ENCODE measurements at regions of chr19 and their contacts with region 1.

Region 1: DNA sequence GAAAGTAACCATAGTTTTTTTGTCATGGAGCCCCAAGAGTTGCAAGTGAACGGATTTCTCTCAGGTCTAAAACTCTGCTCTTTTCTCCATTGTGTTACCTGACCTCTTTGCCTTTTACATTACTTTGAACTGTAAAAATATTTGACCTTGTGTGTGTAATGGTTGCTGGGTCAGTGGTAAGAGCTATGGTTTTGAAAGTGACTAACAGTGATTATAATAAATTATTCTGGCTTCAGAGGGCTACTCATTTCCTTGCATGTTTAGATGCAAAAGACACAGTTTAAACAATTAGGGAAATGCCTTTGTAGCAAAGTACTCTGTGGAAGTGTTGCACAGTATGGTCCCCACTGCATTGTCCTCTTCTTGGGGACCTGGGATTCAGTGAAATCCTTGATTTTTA is 29.3 kb upstream of the PSG8 start:
- DNase-seq: no peak
- H3K4me3 ChIP-seq: no peak overlapping the region
- H3K27me3 ChIP-seq: no peaks in the 10 kb centered on the region
- CTCF ChIP-seq: no peak

Region 2: GRCh38 chr19:42683917-42684513 is 110.8 kb before region 1 on chr19:
- CTCF ChIA-PET with region 1: interaction called, 11 read pairs
- POLR2A ChIA-PET with region 1: no interaction called
- DNase-seq: no peak
- H3K4me3 ChIP-seq: no peak overlapping the region
- H3K27me3 ChIP-seq: peaks cover 2% of the 10 kb centered on the region; the same call in 1 of the 2 replicates
- CTCF ChIP-seq: peak; percentile 71

Region 3: DNA sequence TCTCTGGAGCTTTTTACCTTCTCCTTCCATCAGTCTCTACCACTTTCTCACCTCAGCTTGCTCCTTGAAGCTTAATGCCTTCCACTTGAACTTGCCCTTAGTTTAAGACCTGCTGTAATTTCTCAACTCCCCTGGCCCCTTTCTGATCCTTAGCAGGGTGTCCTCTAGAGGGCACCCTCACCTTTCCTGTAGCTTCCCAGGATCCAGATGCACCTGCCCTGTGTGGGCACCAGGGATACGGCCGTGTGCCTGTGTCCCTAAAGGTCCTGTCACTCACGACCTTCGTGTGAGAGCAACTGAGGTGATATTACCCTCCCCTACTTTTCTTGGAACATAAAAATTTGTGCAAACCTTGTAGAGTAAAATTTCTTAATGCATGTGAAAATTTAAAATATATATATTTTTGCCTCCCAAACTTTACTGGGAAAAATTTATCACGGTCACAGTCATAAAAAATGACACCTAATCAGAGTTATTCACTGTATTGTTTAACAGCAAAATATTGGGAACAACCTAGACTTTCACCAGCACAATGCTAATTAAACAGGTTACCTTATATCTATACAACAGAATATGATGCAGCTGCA is 100.9 kb before region 1 on chr19:
- CTCF ChIA-PET with region 1: interaction called, 15 read pairs
- POLR2A ChIA-PET with region 1: no interaction called
- DNase-seq: no peak
- H3K4me3 ChIP-seq: no peak overlapping the region
- H3K27me3 ChIP-seq: no peaks in the 10 kb centered on the region; the same call in none of the 2 replicates
- CTCF ChIP-seq: peak; percentile 89

Region 4: GRCh38 chr19:42881229-42881628 is 86.5 kb after region 1 on chr19:
- CTCF ChIA-PET with region 1: interaction called, 43 read pairs
- POLR2A ChIA-PET with region 1: no interaction called
- DNase-seq: no peak
- H3K4me3 ChIP-seq: no peak overlapping the region
- H3K27me3 ChIP-seq: no peaks in the 10 kb centered on the region
- CTCF ChIP-seq: peak; percentile 53

Region 5: DNA sequence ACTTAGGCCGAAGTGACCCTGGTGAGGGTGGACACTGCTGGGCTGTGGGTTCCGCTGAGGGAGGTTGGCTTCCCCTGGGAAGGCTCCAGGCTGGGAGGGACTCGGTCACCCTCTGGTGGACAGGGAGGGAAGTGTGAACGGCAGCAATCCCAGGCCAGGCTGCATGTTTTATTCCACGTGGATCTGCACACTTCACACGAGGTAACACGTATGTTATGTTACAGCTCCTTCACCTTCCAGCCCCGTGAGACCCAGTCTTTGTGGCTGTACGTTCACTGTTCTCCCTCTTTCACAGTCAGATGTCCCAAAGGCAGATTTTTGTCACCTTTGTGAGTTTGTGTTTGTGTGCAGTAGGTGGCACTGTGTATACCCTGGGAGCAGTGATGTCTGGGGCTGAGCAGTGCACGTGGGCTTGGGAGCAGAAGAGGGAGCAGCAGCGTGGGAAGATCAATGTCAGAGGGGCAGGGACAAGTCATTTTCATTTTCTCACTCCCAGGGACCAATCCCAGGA is 124.8 kb after region 1 on chr19:
- CTCF ChIA-PET with region 1: interaction called, 14 read pairs
- POLR2A ChIA-PET with region 1: no interaction called
- DNase-seq: no peak
- H3K4me3 ChIP-seq: no peak overlapping the region
- H3K27me3 ChIP-seq: no peaks in the 10 kb centered on the region
- CTCF ChIP-seq: peak; percentile 49